ENCODE measurements at regions of chrX and their contacts with region 1.

Region 1: DNA sequence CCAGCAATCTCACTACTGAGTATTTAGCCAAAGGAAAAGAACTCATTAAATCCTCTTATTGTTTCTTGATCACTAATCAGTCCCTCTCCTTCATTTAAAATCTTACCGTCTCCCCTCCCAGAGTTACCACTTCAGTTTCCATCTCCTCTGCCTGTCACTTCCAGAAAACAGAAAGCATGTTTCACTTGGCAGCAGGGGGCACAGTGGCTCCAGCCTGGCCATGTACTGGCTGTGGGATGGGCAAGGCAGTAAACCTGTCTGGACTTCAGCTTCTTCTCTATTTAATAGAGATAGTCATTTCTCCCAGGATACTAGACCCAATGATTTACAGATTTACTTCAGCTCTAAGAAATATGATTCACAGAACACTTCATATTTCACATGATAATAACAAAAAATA is 63.2 kb downstream of the CD40LG start:
- DNase-seq: peak in 1 of 2 donors; percentile 64
- ATAC-seq: peak; percentile 62
- H3K4me3 ChIP-seq: no peak overlapping the region
- H3K27ac ChIP-seq: no peak overlapping the region
- H3K4me1 ChIP-seq: no peaks in the 10 kb centered on the region
- H3K27me3 ChIP-seq: no peaks in the 10 kb centered on the region

Region 2: DNA sequence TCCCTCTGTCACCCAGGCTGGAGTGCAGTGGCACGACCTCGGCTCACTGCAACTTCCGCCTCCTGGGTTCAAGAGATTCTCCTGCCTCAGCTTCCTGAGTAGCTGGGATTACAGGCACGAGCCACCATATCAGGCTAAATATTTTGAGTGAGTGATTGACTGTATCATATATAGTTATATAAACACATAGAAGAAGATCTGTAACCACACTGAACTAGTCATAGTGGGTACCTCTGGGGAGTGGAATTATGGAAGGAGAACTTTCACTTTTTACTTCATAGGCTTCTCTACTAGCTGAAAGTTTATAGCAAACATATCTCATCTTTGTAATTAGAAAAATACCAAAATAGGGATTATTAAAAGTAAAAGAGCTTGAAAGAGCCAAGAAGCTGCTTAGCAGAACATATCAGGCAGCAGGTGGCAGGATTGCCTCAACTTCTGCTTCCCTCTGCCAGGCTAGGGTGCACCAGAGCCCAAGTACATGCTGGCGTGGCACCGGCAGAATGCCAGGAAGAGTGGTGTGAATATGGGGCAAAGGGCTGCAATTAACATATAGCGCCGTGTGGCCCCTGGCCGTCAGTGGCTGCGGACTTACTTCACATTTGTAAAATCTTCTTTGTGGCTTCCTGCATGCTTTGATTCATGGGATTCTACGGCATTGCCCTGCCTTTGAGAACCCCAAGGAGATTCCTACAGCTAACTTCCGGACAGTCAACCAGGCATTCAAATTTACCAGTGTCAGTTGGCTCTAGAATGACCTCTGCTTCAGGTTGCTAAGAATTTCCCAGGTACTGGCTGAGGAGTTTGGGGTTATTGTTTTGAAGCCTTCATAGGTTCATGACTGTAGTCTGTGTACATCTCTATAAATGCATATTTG is 102.6 kb before region 1 on chrX:
- intact Hi-C with region 1: no loop called
- DNase-seq: peak in 1 of 2 donors; percentile 51
- ATAC-seq: no peak
- H3K4me3 ChIP-seq: no peak overlapping the region
- H3K27ac ChIP-seq: no peak overlapping the region
- H3K4me1 ChIP-seq: no peaks in the 10 kb centered on the region
- H3K27me3 ChIP-seq: no peaks in the 10 kb centered on the region

Region 3: GRCh38 chrX:136920001-136920400 is 208.9 kb after region 1 on chrX:
- intact Hi-C with region 1: loop called (anchors 5 kb)
- DNase-seq: no peak
- ATAC-seq: no peak
- H3K4me3 ChIP-seq: no peak overlapping the region
- H3K27ac ChIP-seq: no peak overlapping the region
- H3K4me1 ChIP-seq: no peaks in the 10 kb centered on the region
- H3K27me3 ChIP-seq: no peaks in the 10 kb centered on the region

Measured in aorta (tissue), 5 donors.